ENCODE measurements at regions of chr12 and their contacts with region 1.

Region 1: GRCh38 chr12:12349711-12350665 is at the start of gene MANSC1:
- DNase-seq: no peak
- H3K4me3 ChIP-seq: peak within 1 kb of the TSS; percentile 66
- H3K27ac ChIP-seq: no peak within 1 kb of the TSS
- H3K27me3 ChIP-seq: no peaks in the 10 kb centered on the region
- CTCF ChIP-seq: peak; percentile 35; the same call in 1 of the 2 replicates
- polyA plus RNA-seq, gene MANSC1: 2.8 and 4.2 TPM in 2 replicates

Region 2: DNA sequence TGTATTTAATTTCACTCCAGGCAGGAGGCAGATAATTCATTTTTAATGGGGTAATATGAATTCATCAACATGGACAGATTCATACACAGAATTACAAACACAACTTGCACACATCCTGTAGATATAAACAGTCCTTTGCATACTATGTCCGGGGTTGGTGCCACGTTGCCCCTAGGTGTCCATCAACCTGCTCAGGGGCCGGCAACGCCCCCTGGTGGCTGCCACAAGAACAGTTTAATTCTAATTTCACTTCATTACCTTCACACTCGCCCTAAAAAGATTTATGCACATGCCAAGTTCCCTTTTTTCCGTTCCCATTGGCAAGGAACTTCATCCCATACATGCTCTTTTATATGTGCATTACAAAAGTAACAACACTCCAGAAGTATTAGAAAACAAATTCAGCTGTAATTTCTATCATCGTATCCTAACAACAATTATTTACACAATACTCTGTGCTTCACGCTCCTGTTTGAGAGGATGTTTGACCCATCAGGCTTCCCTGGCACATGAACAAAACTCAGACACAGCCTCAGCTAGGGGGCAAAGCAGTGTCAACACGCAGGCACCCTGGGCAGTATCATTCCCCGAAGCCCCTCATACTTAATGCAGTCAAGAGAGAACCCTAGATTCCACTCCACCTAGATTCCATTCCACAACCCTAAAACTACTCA is 15.5 kb before region 1 on chr12:
- CTCF ChIA-PET with region 1: interaction called, 12 read pairs
- POLR2A ChIA-PET with region 1: interaction called, 3 read pairs
- DNase-seq: no peak
- H3K4me3 ChIP-seq: no peak overlapping the region
- H3K27ac ChIP-seq: peak overlapping the region; percentile 21
- H3K27me3 ChIP-seq: no peaks in the 10 kb centered on the region
- CTCF ChIP-seq: peak; percentile 73